Mammary epithelial cell (primary cell): ENCODE measurements at regions of chr1 and their contacts with region 1.

Region 1: DNA sequence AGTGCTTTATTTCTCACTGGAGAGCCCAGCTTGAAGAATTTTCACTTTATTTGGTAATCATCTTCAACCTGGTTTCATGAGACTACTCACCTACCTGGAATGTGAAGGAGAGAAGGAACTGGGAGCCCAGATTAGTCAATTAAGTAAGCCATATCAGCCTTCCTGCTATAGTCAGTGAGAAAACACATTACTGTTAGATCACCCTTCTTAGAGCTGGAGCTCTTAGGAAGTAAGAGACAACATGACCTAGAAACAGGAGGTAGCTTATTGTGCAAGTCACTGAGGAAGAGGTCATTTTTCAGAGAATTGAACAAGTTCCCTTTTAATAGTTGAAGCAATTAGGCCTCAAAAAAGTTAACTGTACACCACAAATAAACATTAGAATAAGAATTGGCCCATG is 49.2 kb upstream of the TEKT2 start:
- DNase-seq: peak; percentile 92
- H3K4me3 ChIP-seq: no peak overlapping the region
- H3K27ac ChIP-seq: peak overlapping the region; percentile 30
- H3K4me1 ChIP-seq: peaks cover 14% of the 10 kb centered on the region
- H3K27me3 ChIP-seq: no peaks in the 10 kb centered on the region
- CTCF ChIP-seq: no peak

Region 2: GRCh38 chr1:35930593-35931445 is 103.9 kb before region 1 on chr1 and contains the start of gene AGO3:
- CTCF ChIA-PET with region 1: no interaction called
- dilution Hi-C with region 1: no loop called
- in situ Hi-C with region 1: no loop called
- intact Hi-C with region 1: loop called (anchors 5 kb)
- DNase-seq: peak; percentile 91
- H3K4me3 ChIP-seq: peak within 1 kb of the TSS; percentile 73 to 92 (median 80)
- H3K27ac ChIP-seq: peak within 1 kb of the TSS; percentile 87
- H3K4me1 ChIP-seq: peaks cover 15% of the 10 kb centered on the region
- H3K27me3 ChIP-seq: no peaks in the 10 kb centered on the region
- CTCF ChIP-seq: no peak
- total RNA-seq, gene AGO3: 19.8 to 21.7 TPM

Region 3: DNA sequence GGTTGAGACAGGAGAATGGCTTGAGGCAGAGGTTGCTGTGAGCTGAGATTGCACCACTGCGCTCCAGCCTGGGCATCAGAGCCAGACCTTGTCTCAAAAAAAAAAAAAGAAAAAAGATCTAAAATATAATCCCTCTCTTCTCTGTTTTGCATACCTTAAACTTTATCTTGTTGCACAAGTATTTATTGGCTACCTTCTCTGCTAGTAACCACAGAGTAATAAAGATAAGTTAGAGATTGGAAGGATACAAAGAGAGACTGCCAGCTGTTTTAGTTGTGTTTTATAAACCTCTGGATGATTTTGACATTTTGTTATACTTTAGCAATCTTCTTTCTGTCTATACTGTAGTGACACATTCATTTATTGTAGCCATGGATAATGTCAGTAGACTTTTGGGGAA is 76.1 kb before region 1 on chr1:
- CTCF ChIA-PET with region 1: no interaction called
- dilution Hi-C with region 1: no loop called
- in situ Hi-C with region 1: no loop called
- intact Hi-C with region 1: no loop called
- DNase-seq: no peak
- H3K4me3 ChIP-seq: no peak overlapping the region
- H3K27ac ChIP-seq: no peak overlapping the region
- H3K4me1 ChIP-seq: no peaks in the 10 kb centered on the region
- H3K27me3 ChIP-seq: no peaks in the 10 kb centered on the region
- CTCF ChIP-seq: no peak

Region 4: GRCh38 chr1:35971601-35972000 is 63.1 kb before region 1 on chr1:
- CTCF ChIA-PET with region 1: no interaction called
- dilution Hi-C with region 1: no loop called
- in situ Hi-C with region 1: no loop called
- intact Hi-C with region 1: loop called (anchors 10 kb)
- DNase-seq: no peak
- H3K4me3 ChIP-seq: no peak overlapping the region
- H3K27ac ChIP-seq: no peak overlapping the region
- H3K4me1 ChIP-seq: no peaks in the 10 kb centered on the region
- H3K27me3 ChIP-seq: no peaks in the 10 kb centered on the region
- CTCF ChIP-seq: no peak